ENCODE measurements at regions of chr11 and their contacts with region 1.

Region 1: DNA sequence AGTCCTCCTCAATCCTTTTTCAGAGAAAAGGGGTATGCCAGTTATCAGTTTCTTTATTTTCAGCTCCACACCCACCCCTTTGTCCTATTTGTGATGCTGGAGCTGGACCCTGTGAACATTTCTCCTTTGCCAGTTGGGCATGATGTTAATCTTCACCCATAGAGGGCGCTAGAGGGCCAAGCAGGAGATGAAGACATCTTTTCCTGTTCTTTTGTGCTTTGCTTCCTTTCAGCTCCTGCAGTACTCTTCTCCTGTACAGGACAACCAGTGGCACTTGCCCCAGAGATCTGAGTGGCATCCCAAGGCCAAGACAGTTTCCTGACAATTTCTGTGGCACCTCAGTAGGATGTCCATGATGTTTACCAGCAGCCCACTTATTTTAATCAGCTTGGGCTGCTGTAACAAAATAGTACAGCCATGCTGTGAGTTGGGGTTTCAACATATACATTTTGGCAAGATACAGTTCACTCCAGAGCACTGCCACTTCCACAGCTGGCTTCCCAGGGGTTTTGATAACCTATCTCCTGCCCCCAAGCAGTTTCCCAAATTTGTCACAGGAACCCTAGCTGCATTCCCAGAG is 4.6 kb downstream of the SAA2 start:
- DNase-seq: peak; percentile 82
- ATAC-seq: peak; percentile 28
- H3K4me3 Mint-ChIP-seq: no peak overlapping the region
- H3K27ac Mint-ChIP-seq: no peak overlapping the region
- H3K4me1 Mint-ChIP-seq: peaks cover 37% of the 10 kb centered on the region
- H3K27me3 Mint-ChIP-seq: peaks cover 31% of the 10 kb centered on the region

Region 2: GRCh38 chr11:17864478-17864941 is 379.4 kb before region 1 on chr11:
- CTCF ChIA-PET with region 1: no interaction called
- DNase-seq: no peak
- ATAC-seq: no peak
- H3K4me3 Mint-ChIP-seq: no peak overlapping the region
- H3K27ac Mint-ChIP-seq: no peak overlapping the region
- H3K4me1 Mint-ChIP-seq: no peaks in the 10 kb centered on the region
- H3K27me3 Mint-ChIP-seq: no peaks in the 10 kb centered on the region

Region 3: GRCh38 chr11:18277565-18278271 is 33.8 kb after region 1 on chr11:
- CTCF ChIA-PET with region 1: interaction called, 15 read pairs
- DNase-seq: no peak
- ATAC-seq: no peak
- H3K4me3 Mint-ChIP-seq: no peak overlapping the region
- H3K27ac Mint-ChIP-seq: peak overlapping the region; percentile 4
- H3K4me1 Mint-ChIP-seq: peaks cover 28% of the 10 kb centered on the region
- H3K27me3 Mint-ChIP-seq: no peaks in the 10 kb centered on the region

Region 4: GRCh38 chr11:18383388-18384156 is 139.7 kb after region 1 on chr11:
- CTCF ChIA-PET with region 1: interaction called, 11 read pairs
- DNase-seq: peak; percentile 82
- ATAC-seq: peak; percentile 87
- H3K4me3 Mint-ChIP-seq: peak overlapping the region; percentile 38
- H3K27ac Mint-ChIP-seq: peak overlapping the region; percentile 96
- H3K4me1 Mint-ChIP-seq: peaks cover 48% of the 10 kb centered on the region
- H3K27me3 Mint-ChIP-seq: no peaks in the 10 kb centered on the region

Region 5: GRCh38 chr11:18526521-18527296 is 282.8 kb after region 1 on chr11 and contains the start of gene TSG101:
- CTCF ChIA-PET with region 1: interaction called, 25 read pairs
- DNase-seq: peak; percentile 94
- ATAC-seq: peak; percentile 89
- H3K4me3 Mint-ChIP-seq: peak within 1 kb of the TSS; percentile 97
- H3K27ac Mint-ChIP-seq: peak within 1 kb of the TSS; percentile 100
- H3K4me1 Mint-ChIP-seq: peaks cover 38% of the 10 kb centered on the region
- H3K27me3 Mint-ChIP-seq: peaks cover 3% of the 10 kb centered on the region
- total RNA-seq, gene TSG101: 30.5 to 42.2 TPM

Region 6: GRCh38 chr11:18684267-18684666 is 440.4 kb after region 1 on chr11:
- CTCF ChIA-PET with region 1: no interaction called
- DNase-seq: no peak
- ATAC-seq: no peak
- H3K4me3 Mint-ChIP-seq: no peak overlapping the region
- H3K27ac Mint-ChIP-seq: no peak overlapping the region
- H3K4me1 Mint-ChIP-seq: no peaks in the 10 kb centered on the region
- H3K27me3 Mint-ChIP-seq: peaks cover 4% of the 10 kb centered on the region

Region 7: DNA sequence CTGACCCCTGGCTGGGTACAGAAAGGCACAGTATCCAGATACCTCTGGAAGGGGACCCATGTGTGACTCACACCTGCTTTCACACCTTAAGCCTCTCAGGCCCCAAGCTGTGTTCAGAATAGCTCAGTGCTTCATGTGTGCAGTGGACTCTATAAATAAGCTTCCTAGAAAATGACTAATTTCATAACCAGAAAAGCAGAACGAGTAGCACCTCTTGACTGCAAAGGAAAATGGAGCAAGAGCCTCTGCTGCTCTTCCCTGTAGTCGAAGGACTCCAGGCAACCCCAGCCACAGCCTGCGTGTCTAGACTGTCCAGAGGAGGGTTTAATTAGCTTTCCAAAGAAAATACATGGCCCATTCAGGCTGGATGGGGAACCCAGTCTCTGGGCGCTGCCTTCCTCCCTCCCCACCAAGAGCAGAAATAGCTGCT is 524.6 kb after region 1 on chr11:
- CTCF ChIA-PET with region 1: interaction called, 11 read pairs
- DNase-seq: peak; percentile 66
- ATAC-seq: peak; percentile 75
- H3K4me3 Mint-ChIP-seq: no peak overlapping the region
- H3K27ac Mint-ChIP-seq: peak overlapping the region; percentile 51
- H3K4me1 Mint-ChIP-seq: peaks cover 42% of the 10 kb centered on the region
- H3K27me3 Mint-ChIP-seq: peaks cover 13% of the 10 kb centered on the region